ENCODE measurements at regions of chr3 and their contacts with region 1.

Region 1: GRCh38 chr3:5136211-5136918 is 14.3 kb downstream of the ARL8B start:
- DNase-seq: peak; percentile 80
- ATAC-seq: peak; percentile 87
- H3K4me3 ChIP-seq: no peak overlapping the region
- H3K4me3 Mint-ChIP-seq: peak overlapping the region; percentile 24
- H3K27ac ChIP-seq: peak overlapping the region; percentile 66 to 94
- H3K27ac Mint-ChIP-seq: peak overlapping the region; percentile 32
- H3K4me1 ChIP-seq: peaks cover 41 to 46% of the 10 kb centered on the region in 2 donors
- H3K4me1 Mint-ChIP-seq: peaks cover 68% of the 10 kb centered on the region
- H3K27me3 ChIP-seq: no peaks in the 10 kb centered on the region
- H3K27me3 Mint-ChIP-seq: no peaks in the 10 kb centered on the region
- CTCF ChIP-seq: peak; percentile 73

Region 2: GRCh38 chr3:5095879-5096278 is 40.5 kb before region 1 on chr3:
- CTCF ChIA-PET with region 1: no interaction called
- POLR2A ChIA-PET with region 1: no interaction called
- intact Hi-C with region 1: no loop called
- DNase-seq: peak; percentile 19
- ATAC-seq: no peak
- H3K4me3 ChIP-seq: no peak overlapping the region
- H3K4me3 Mint-ChIP-seq: no peak overlapping the region
- H3K27ac ChIP-seq: no peak overlapping the region
- H3K27ac Mint-ChIP-seq: no peak overlapping the region
- H3K4me1 ChIP-seq: peaks cover 3 to 4% of the 10 kb centered on the region in 2 donors
- H3K4me1 Mint-ChIP-seq: peaks cover 5% of the 10 kb centered on the region
- H3K27me3 ChIP-seq: peaks cover 0 to 19% (median 4%) of the 10 kb centered on the region in 4 experiments
- H3K27me3 Mint-ChIP-seq: peaks cover 51% of the 10 kb centered on the region
- CTCF ChIP-seq: no peak

Region 3: GRCh38 chr3:5122030-5122740 is 14.2 kb before region 1 on chr3 and contains the start of gene ARL8B:
- CTCF ChIA-PET with region 1: interaction called, 13 read pairs
- POLR2A ChIA-PET with region 1: no interaction called
- intact Hi-C with region 1: loop called (anchors 1 kb)
- DNase-seq: peak; percentile 93
- ATAC-seq: peak; percentile 97
- H3K4me3 ChIP-seq: peak within 1 kb of the TSS; percentile 83 to 100 (median 97)
- H3K4me3 Mint-ChIP-seq: peak within 1 kb of the TSS; percentile 95
- H3K27ac ChIP-seq: peak within 1 kb of the TSS; percentile 88 to 95
- H3K27ac Mint-ChIP-seq: peak within 1 kb of the TSS; percentile 91
- H3K4me1 ChIP-seq: peaks cover 25 to 29% of the 10 kb centered on the region in 2 donors
- H3K4me1 Mint-ChIP-seq: peaks cover 37% of the 10 kb centered on the region
- H3K27me3 ChIP-seq: no peaks in the 10 kb centered on the region
- H3K27me3 Mint-ChIP-seq: no peaks in the 10 kb centered on the region
- CTCF ChIP-seq: peak; percentile 97
- total RNA-seq, gene ARL8B: 66.4 and 67.3 TPM in 2 replicates

Region 4: DNA sequence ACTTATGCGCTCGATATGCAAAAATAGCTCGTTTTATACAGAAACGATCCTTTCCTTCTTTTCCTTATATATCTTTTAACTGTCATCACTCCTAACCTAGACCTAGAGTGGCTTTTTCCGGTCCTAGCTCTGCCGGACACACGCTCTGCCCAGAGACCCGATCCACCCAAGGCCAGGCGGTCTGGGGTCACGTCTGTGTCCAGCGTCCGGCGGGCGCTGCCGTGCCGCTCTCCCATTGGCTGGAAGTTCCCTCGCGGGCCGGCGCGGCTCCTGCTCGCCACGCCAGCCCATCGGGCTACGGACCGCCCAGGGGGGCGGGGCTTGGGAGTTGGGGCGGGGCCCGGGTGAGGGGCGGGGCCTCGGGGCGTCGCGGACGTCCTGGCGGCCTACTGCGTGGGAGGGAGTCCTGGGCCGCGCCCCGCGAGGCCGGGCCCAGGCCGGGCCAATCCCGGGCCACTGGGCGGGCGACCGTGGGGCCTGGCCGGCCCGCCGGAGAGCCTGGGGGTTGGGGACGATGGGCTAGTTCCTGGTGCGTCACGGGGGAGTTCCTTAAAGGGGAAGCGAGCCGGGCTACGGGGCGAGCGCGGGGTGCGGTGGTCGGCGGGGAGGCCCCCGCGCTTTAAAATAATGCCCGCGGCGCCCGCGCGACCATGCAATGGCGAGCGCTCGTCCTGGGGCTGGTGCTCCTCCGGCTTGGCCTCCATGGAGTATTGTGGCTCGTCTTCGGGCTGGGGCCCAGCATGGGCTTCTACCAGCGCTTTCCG is 51.0 kb after region 1 on chr3 and contains the start of gene EDEM1:
- CTCF ChIA-PET with region 1: interaction called, 17 read pairs
- POLR2A ChIA-PET with region 1: interaction called, 4 read pairs
- intact Hi-C with region 1: loop called (anchors 2 kb)
- DNase-seq: peak; percentile 96
- ATAC-seq: peak; percentile 88
- H3K4me3 ChIP-seq: peak within 1 kb of the TSS; percentile 91 to 99 (median 94)
- H3K4me3 Mint-ChIP-seq: peak within 1 kb of the TSS; percentile 99
- H3K27ac ChIP-seq: peak within 1 kb of the TSS; percentile 94 to 96
- H3K27ac Mint-ChIP-seq: peak within 1 kb of the TSS; percentile 99
- H3K4me1 ChIP-seq: peaks cover 69 to 75% of the 10 kb centered on the region in 2 donors
- H3K4me1 Mint-ChIP-seq: peaks cover 69% of the 10 kb centered on the region
- H3K27me3 ChIP-seq: no peaks in the 10 kb centered on the region
- H3K27me3 Mint-ChIP-seq: no peaks in the 10 kb centered on the region
- CTCF ChIP-seq: no peak
- total RNA-seq, gene EDEM1: 167 and 177 TPM in 2 replicates

Region 5: DNA sequence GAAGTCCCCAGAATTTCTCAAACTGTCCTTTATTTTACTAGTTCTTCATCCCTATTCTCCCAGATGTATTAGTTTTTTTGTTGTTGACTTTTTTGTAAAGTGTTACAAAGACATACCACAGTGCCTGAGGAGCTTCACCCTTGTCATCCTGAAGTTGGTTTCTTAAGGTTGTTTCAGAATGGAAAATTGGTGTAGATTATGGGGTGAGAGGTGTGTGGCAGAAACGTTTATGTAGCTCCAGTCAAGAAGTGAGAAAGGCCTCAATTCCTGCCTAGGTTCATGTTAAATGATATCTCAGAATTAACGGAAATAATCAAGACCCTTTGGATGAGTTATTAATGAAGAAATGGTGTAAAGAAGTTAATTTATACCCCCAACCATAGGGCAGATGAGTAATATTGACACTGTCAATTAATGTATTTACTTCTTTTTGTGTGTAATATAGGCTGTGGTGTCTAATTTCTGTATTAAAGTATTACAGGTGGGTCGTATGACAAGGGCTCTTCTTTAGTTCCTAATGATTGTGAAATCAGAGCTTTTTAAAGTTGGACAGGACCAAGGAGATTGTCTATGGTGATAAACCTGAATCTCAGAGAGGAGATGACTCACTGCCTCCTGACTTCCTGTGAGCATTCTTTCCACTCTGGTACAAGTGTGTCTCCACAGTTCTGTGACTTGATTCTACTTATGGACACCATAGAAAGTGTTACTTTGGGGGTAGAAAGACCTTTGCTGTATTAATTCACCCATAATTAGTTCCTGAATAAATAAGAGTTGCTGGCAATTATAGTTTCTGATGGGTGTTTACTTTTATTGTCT is 58.2 kb after region 1 on chr3:
- CTCF ChIA-PET with region 1: interaction called, 13 read pairs
- POLR2A ChIA-PET with region 1: interaction called, 3 read pairs
- intact Hi-C with region 1: loop called (anchors 1 kb)
- DNase-seq: peak; percentile 48
- ATAC-seq: peak; percentile 56
- H3K4me3 ChIP-seq: no peak overlapping the region
- H3K4me3 Mint-ChIP-seq: peak overlapping the region; percentile 66
- H3K27ac ChIP-seq: peak overlapping the region; percentile 81 to 97
- H3K27ac Mint-ChIP-seq: peak overlapping the region; percentile 82
- H3K4me1 ChIP-seq: peaks cover 86 to 91% of the 10 kb centered on the region in 2 donors
- H3K4me1 Mint-ChIP-seq: peaks cover 87% of the 10 kb centered on the region
- H3K27me3 ChIP-seq: no peaks in the 10 kb centered on the region
- H3K27me3 Mint-ChIP-seq: no peaks in the 10 kb centered on the region
- CTCF ChIP-seq: no peak

Region 6: DNA sequence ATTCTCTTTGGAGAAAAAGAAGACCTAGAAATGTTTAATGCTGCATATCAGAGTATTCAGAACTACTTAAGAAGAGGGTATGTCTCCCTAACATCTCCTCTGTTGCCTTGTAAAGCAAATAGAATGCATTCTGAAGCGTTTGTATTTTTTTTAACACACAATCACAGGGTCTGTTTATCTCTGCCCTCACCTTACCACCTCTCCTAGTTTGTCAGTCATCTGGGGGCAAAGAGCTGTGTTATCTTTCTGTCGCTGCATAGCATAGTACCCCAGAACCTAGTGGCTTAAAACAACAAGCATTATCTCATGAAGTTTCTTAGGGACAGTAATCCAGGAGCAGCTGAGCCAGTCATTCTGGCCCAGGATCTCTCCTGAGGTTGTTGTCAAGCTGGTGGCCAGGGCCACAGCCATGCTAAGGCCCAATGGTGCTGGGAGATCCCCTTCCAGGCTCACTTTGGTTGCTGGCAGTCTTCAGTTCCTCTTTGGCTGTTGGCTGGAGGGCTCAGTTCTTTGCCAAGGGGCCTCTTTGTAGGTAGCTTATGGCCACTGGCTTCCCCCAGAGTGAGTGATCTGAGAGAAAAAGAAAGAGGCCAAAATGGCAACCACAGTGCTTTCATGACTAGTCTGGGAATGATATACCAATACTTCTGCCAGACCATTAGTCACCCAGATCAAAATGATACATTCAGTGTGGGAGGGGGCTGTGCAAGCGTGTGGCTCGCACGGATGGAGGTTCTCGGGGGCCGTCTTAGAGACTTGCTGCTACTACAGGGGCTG is 69.0 kb after region 1 on chr3:
- CTCF ChIA-PET with region 1: interaction called, 16 read pairs
- POLR2A ChIA-PET with region 1: no interaction called
- intact Hi-C with region 1: no loop called
- DNase-seq: peak; percentile 73
- ATAC-seq: peak; percentile 97
- H3K4me3 ChIP-seq: no peak overlapping the region
- H3K4me3 Mint-ChIP-seq: peak overlapping the region; percentile 71
- H3K27ac ChIP-seq: peak overlapping the region; percentile 3 to 78
- H3K27ac Mint-ChIP-seq: peak overlapping the region; percentile 90
- H3K4me1 ChIP-seq: peaks cover 11 to 14% of the 10 kb centered on the region in 2 donors
- H3K4me1 Mint-ChIP-seq: peaks cover 30% of the 10 kb centered on the region
- H3K27me3 ChIP-seq: no peaks in the 10 kb centered on the region
- H3K27me3 Mint-ChIP-seq: no peaks in the 10 kb centered on the region
- CTCF ChIP-seq: no peak

Region 7: DNA sequence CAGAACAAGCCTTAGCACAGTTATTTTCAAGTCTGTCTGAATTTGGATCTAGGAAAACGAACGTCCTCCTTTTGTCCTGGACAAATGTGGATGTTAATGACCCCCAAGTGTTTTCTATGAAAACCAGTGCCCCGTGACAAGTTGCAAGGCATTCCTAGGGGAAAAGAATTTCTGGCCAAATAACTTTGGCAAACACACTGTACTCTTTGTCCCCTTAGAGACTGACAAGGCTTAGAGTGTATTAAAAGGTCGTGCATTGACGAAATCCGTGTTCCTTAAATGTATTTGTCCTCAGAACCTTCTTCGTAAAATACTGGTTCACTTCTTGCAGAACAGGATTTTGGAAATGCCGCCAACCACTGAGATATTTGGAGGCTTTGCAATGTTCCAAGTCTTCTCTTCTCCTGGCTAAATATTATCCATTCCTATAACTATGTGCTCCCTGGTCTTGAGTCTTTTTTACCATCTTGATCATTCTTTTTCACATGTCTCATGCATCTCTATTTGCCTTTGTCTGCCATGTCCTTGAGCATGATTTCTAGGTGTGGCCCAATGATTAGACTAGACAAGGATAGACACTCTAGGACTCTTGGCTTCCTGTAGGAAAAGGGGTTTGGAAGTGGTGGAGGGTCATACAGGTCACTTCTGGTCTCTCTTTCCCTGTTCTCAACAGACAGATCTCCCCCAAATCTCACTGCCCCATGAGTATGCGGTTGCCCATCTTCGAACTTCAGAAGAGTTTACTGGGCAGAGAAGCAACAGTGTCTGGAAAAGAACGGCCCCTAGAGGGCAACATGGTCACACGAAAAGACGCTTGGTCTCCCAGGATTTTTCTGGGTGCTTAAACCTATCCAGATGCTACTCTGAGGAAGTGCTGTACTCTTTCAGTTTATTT is 168.7 kb after region 1 on chr3:
- CTCF ChIA-PET with region 1: interaction called, 4 read pairs
- POLR2A ChIA-PET with region 1: no interaction called
- intact Hi-C with region 1: loop called (anchors 2 kb)
- DNase-seq: peak; percentile 64
- ATAC-seq: peak; percentile 45
- H3K4me3 ChIP-seq: no peak overlapping the region
- H3K4me3 Mint-ChIP-seq: no peak overlapping the region
- H3K27ac ChIP-seq: no peak overlapping the region
- H3K27ac Mint-ChIP-seq: no peak overlapping the region
- H3K4me1 ChIP-seq: no peaks in the 10 kb centered on the region
- H3K4me1 Mint-ChIP-seq: no peaks in the 10 kb centered on the region
- H3K27me3 ChIP-seq: no peaks in the 10 kb centered on the region
- H3K27me3 Mint-ChIP-seq: no peaks in the 10 kb centered on the region
- CTCF ChIP-seq: peak; percentile 73

Region 8: DNA sequence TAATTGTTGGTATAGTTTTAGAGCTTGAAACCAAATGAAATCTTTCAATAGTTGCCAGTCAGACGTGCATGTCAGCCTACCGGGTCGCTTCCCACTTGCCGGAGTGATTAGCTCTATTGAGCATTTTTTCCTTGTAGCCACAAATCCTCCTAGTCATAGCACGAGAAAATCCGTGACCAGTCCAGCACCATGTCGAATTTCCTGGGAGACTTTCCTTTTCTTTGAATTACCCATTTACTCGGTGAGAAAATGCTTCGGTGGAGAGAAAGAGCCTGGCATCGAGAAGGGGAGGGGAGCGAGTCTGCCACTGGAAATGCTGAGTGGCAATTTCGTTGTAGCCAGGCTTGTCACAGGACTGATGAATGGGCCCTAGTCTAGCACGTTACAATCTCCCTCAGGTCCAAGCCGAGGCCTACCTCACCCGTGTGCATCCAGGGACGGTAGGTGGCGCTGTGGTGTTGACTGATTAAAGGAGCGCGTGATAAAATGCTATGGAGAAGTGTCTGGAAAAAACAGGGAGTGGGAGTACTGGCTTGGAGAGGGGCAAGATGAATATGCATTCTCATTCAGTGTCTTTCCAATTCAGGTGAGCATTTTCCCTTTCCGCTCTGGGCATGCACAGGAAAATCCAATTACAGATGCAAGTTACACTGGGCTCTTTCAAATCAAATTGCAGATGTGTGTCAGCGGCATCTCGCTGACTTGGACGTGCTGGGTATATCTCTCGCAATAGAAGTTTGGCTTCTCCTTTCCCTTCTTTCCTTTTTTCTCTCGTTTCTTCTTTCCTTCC is 289.9 kb after region 1 on chr3:
- CTCF ChIA-PET with region 1: no interaction called
- POLR2A ChIA-PET with region 1: no interaction called
- intact Hi-C with region 1: loop called (anchors 5 kb)
- DNase-seq: peak; percentile 68
- ATAC-seq: peak; percentile 64
- H3K4me3 ChIP-seq: no peak overlapping the region
- H3K4me3 Mint-ChIP-seq: no peak overlapping the region
- H3K27ac ChIP-seq: no peak overlapping the region
- H3K27ac Mint-ChIP-seq: no peak overlapping the region
- H3K4me1 ChIP-seq: peaks cover 15 to 21% of the 10 kb centered on the region in 2 donors
- H3K4me1 Mint-ChIP-seq: peaks cover 18% of the 10 kb centered on the region
- H3K27me3 ChIP-seq: peaks cover 0 to 7% (median 0%) of the 10 kb centered on the region in 4 experiments
- H3K27me3 Mint-ChIP-seq: peaks cover 5% of the 10 kb centered on the region
- CTCF ChIP-seq: peak; percentile 86

Measured in B cell (primary cell).